Activated CD4-positive, alpha-beta T cell treated with anti-CD3 and anti-CD28 coated beads for 36 hours (primary cell): ENCODE measurements at regions of chr14 and their contacts with region 1.

Region 1: DNA sequence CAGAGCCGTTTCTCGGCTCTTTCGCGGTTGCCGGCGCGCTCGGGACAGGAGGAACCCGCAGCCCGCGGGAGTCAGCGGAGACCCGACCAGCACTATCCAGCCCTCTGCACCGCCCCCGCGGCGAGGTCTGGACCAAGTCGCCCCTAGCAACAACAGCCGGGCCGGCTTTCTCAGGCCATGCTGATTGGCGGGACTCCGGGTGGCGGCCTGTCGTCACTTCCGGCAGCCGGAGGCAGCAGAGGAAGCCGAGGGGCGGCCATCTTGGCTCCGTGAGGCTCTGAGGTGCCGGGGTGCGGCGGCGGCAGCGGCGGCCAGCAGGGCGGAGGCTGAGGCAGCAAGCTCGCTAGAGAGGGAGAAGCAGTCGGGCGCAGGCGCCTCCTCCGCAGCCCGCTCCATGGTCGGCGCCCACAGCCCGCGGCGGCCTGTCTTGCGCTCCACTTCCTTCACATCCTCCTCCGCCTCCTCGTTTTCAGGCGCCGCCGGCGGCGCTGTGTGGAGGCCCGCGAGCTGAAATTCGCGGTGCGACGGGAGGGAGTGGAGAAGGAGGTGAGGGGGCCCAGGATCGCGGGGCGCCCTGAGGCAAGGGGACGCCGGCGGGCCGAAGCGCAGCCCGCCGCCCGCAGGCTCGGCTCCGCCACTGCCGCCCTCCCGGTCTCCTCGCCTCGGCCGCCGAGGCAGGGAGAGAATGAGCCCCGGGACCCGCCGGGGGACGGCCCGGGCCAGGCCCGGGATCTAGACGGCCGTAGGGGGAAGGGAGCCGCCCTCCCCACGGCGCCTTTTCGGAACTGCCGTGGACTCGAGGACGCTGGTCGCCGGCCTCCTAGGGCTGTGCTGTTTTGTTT is at the start of gene MARK3:
- DNase-seq: peak; percentile 98
- ATAC-seq: peak; percentile 93
- H3K4me3 Mint-ChIP-seq: peak within 1 kb of the TSS; percentile 99
- H3K27ac Mint-ChIP-seq: peak within 1 kb of the TSS; percentile 98
- H3K4me1 Mint-ChIP-seq: peaks cover 33% of the 10 kb centered on the region
- H3K27me3 Mint-ChIP-seq: no peaks in the 10 kb centered on the region
- total RNA-seq, gene MARK3: 57.3 to 64.9 TPM

Region 2: GRCh38 chr14:102579696-102580334 is 805.6 kb before region 1 on chr14:
- CTCF ChIA-PET with region 1: no interaction called
- POLR2A ChIA-PET with region 1: no interaction called
- intact Hi-C with region 1: no loop called
- DNase-seq: no peak
- ATAC-seq: no peak
- H3K4me3 Mint-ChIP-seq: no peak overlapping the region
- H3K27ac Mint-ChIP-seq: no peak overlapping the region
- H3K4me1 Mint-ChIP-seq: no peaks in the 10 kb centered on the region
- H3K27me3 Mint-ChIP-seq: peaks cover 3% of the 10 kb centered on the region

Region 3: DNA sequence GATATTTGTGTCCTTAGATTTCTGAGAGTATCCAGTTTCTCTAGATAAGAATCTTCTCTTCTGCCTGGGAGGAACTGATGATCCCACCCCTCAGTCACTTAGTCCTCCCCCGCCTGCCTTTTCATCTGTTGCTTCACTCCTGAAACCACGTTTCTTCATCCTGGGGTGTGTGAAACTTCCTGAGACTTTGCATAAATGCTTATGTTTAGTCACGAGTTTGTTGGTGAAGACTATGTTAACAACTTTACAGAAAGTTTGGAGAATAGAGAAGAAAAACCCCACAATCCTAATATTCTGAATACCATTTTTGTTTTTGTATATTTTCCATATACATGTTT is 33.1 kb after region 1 on chr14:
- CTCF ChIA-PET with region 1: interaction called, 44 read pairs
- POLR2A ChIA-PET with region 1: no interaction called
- intact Hi-C with region 1: loop called in 1 of 2 experiments (anchors 5 kb)
- DNase-seq: peak; percentile 30
- ATAC-seq: peak; percentile 63
- H3K4me3 Mint-ChIP-seq: no peak overlapping the region
- H3K27ac Mint-ChIP-seq: peak overlapping the region; percentile 80
- H3K4me1 Mint-ChIP-seq: peaks cover 47% of the 10 kb centered on the region
- H3K27me3 Mint-ChIP-seq: no peaks in the 10 kb centered on the region

Region 4: GRCh38 chr14:103628684-103629502 is 243.5 kb after region 1 on chr14 and contains the start of gene KLC1:
- CTCF ChIA-PET with region 1: no interaction called
- POLR2A ChIA-PET with region 1: no interaction called
- intact Hi-C with region 1: loop called in 1 of 2 experiments (anchors 1 kb)
- DNase-seq: peak; percentile 92
- ATAC-seq: peak; percentile 77
- H3K4me3 Mint-ChIP-seq: peak within 1 kb of the TSS; percentile 87
- H3K27ac Mint-ChIP-seq: peak within 1 kb of the TSS; percentile 81
- H3K4me1 Mint-ChIP-seq: peaks cover 35% of the 10 kb centered on the region
- H3K27me3 Mint-ChIP-seq: no peaks in the 10 kb centered on the region
- total RNA-seq, gene KLC1: 97.4 to 113 TPM